Caco-2 (cell line): ENCODE measurements at regions of chr7 and their contacts with region 1.

Region 1: DNA sequence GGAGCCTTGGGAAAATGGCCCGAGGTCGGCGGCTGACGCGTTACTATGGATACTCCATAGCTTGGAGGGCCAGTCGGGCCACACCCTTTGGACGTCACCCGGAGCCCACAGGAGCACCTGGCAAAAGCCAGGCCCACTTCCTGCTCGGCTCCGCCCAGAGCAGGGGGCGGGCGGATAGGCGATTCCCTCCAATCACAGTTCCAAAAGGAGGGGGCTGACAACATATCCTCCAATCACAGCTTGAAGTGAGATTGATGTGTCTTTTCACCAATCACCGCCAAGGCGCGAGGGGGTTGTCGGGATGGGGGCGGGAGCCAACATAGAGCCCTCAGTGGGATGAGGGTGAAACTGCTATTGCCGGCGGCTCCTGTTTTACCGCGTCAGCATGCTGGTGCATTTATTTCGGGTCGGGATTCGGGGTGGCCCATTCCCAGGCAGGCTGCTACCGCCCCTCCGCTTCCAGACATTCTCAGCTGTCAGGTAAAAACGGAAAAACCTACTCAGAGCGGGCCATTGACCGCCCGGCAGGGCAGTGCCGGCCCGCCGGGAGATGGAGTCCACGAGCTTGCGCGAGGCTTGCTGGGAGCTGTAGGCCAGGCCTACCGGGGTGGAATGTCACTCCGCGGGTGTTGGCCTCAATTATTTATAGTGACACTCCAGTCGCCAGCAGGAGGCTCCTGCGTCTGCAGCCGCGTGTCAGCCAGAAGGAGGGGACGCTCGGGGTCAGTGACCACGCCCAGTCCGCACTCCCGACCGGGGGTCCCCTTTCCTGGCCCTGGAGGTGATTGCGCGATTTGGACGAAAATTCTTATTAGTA is at the start of gene ABCB8:
- DNase-seq: peak; percentile 100
- H3K4me3 ChIP-seq: peak within 1 kb of the TSS; percentile 70
- H3K4me3 Mint-ChIP-seq: peak within 1 kb of the TSS; percentile 87
- H3K27ac Mint-ChIP-seq: peak within 1 kb of the TSS; percentile 99
- H3K4me1 ChIP-seq: peaks cover 30% of the 10 kb centered on the region
- H3K4me1 Mint-ChIP-seq: peaks cover 35% of the 10 kb centered on the region
- H3K27me3 ChIP-seq: no peaks in the 10 kb centered on the region
- H3K27me3 Mint-ChIP-seq: no peaks in the 10 kb centered on the region
- CTCF ChIP-seq: peak; percentile 65 to 67
- total RNA-seq, gene ABCB8: 30.1 and 30.8 TPM in 2 replicates

Region 2: DNA sequence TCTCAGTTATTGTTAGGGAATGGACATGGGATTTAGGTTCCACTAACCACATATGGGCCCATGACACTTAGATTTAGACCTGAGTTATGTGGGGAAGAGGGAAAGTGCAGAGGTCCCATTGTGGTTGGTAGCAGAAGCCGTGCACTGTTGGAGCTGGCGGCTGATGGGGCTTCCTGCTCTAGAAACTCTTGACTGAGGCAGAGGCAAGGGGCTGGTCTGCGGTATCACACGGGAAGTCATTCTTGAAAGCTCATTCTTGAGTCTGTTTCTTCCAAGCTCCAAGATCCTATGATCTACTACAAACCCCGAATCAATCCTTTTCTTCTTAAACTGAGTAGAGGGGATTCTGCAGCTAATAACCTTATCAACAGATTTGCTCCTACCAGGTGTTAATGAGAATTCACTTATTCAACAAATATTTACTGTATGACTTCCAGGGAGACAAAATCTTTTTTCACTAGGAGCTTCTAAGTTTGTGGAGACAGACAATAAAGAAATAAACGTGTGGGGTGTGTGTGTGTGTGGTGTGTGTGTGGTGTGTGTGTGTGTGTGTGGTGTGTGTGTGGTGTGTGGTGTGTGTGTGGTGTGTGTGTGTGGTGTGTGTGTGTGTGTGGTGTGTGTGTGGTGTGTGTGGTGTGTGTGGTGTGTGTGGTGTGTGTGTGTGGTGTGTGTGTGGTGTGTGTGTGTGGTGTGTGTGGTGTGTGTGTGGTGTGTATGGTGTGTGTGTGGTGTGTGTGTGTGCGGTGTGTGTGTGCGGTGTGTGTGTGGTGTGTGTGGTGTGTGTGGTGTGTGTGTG is 118.9 kb before region 1 on chr7:
- CTCF ChIA-PET with region 1: no interaction called
- POLR2A ChIA-PET with region 1: no interaction called
- intact Hi-C with region 1: no loop called
- DNase-seq: no peak
- H3K4me3 ChIP-seq: no peak overlapping the region
- H3K4me3 Mint-ChIP-seq: no peak overlapping the region
- H3K27ac Mint-ChIP-seq: no peak overlapping the region
- H3K4me1 ChIP-seq: no peaks in the 10 kb centered on the region
- H3K4me1 Mint-ChIP-seq: no peaks in the 10 kb centered on the region
- H3K27me3 ChIP-seq: no peaks in the 10 kb centered on the region
- H3K27me3 Mint-ChIP-seq: peaks cover 27% of the 10 kb centered on the region
- CTCF ChIP-seq: no peak

Region 3: GRCh38 chr7:151017953-151018420 is 10.4 kb before region 1 on chr7:
- CTCF ChIA-PET with region 1: interaction called, 54 read pairs
- POLR2A ChIA-PET with region 1: interaction called, 4 read pairs
- intact Hi-C with region 1: loop called (anchors 1 kb)
- DNase-seq: peak; percentile 74 to 89
- H3K4me3 ChIP-seq: peak overlapping the region; percentile 33
- H3K4me3 Mint-ChIP-seq: peak overlapping the region; percentile 77
- H3K27ac Mint-ChIP-seq: peak overlapping the region; percentile 80
- H3K4me1 ChIP-seq: peaks cover 26% of the 10 kb centered on the region
- H3K4me1 Mint-ChIP-seq: peaks cover 12% of the 10 kb centered on the region
- H3K27me3 ChIP-seq: no peaks in the 10 kb centered on the region
- H3K27me3 Mint-ChIP-seq: peaks cover 6% of the 10 kb centered on the region
- CTCF ChIP-seq: peak; percentile 91 to 98

Region 4: GRCh38 chr7:151057989-151058780 is 29.8 kb after region 1 on chr7:
- CTCF ChIA-PET with region 1: interaction called, 21 read pairs
- POLR2A ChIA-PET with region 1: interaction called, 20 read pairs
- intact Hi-C with region 1: loop called (anchors 1 kb)
- DNase-seq: peak; percentile 98 to 99
- H3K4me3 ChIP-seq: peak overlapping the region; percentile 59
- H3K4me3 Mint-ChIP-seq: peak overlapping the region; percentile 95
- H3K27ac Mint-ChIP-seq: peak overlapping the region; percentile 94
- H3K4me1 ChIP-seq: peaks cover 23% of the 10 kb centered on the region
- H3K4me1 Mint-ChIP-seq: peaks cover 25% of the 10 kb centered on the region
- H3K27me3 ChIP-seq: no peaks in the 10 kb centered on the region
- H3K27me3 Mint-ChIP-seq: no peaks in the 10 kb centered on the region
- CTCF ChIP-seq: no peak

Region 5: GRCh38 chr7:151080522-151081169 is 52.3 kb after region 1 on chr7 and contains the start of gene FASTK:
- CTCF ChIA-PET with region 1: interaction called, 3 read pairs
- POLR2A ChIA-PET with region 1: interaction called, 13 read pairs
- intact Hi-C with region 1: loop called (anchors 2 kb)
- DNase-seq: peak; percentile 91 to 92
- H3K4me3 ChIP-seq: peak within 1 kb of the TSS; percentile 98
- H3K4me3 Mint-ChIP-seq: peak within 1 kb of the TSS; percentile 93
- H3K27ac Mint-ChIP-seq: peak within 1 kb of the TSS; percentile 87
- H3K4me1 ChIP-seq: peaks cover 26% of the 10 kb centered on the region
- H3K4me1 Mint-ChIP-seq: peaks cover 13% of the 10 kb centered on the region
- H3K27me3 ChIP-seq: no peaks in the 10 kb centered on the region
- H3K27me3 Mint-ChIP-seq: no peaks in the 10 kb centered on the region
- CTCF ChIP-seq: no peak
- total RNA-seq, gene FASTK: 114 and 119 TPM in 2 replicates

Region 6: DNA sequence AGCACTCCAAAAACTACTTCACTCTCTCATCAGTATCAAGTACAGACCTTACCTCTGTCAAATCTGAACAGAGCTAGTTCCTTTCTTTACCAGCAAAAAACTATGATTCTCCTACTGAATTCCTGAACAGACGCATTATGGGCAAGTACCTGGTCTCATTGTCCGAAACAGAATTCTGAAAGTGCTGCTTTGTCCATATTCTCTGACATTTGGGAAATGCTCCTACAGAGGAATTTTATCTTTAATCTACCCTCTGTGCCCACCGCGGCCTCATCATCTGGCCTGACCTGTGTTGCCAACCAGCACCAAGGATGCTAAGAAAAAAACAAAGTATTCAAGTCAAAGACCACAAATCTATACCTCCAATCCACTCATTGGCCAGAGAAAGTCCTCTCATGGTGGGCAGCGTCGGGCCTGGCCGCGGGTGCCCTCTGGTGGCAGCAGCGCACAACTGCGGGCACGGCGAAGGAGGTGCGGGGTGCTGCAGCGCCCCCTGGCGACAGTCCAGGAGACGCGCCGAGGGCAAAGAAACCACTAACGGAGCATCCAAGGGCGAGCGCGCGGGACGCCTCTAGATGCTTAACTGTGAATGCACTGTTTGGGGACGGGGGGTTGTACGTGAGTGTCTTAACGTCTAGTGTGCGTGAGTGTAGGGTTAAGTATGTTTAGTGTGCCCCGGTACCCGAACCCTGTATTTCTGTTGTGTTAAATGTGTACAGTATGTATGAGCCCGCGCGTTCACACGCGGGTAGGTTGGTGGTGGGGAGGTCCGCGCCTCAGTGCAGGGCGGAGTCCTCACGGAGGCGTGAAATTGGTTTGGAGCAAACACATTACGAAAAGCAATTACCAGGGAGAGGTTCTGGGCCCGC is 144.2 kb after region 1 on chr7:
- CTCF ChIA-PET with region 1: no interaction called
- POLR2A ChIA-PET with region 1: no interaction called
- intact Hi-C with region 1: no loop called
- DNase-seq: peak; percentile 63 to 84
- H3K4me3 ChIP-seq: no peak overlapping the region
- H3K4me3 Mint-ChIP-seq: no peak overlapping the region
- H3K27ac Mint-ChIP-seq: no peak overlapping the region
- H3K4me1 ChIP-seq: no peaks in the 10 kb centered on the region
- H3K4me1 Mint-ChIP-seq: peaks cover 5% of the 10 kb centered on the region
- H3K27me3 ChIP-seq: peaks cover 4% of the 10 kb centered on the region
- H3K27me3 Mint-ChIP-seq: peaks cover 33% of the 10 kb centered on the region
- CTCF ChIP-seq: peak; percentile 100

Region 7: DNA sequence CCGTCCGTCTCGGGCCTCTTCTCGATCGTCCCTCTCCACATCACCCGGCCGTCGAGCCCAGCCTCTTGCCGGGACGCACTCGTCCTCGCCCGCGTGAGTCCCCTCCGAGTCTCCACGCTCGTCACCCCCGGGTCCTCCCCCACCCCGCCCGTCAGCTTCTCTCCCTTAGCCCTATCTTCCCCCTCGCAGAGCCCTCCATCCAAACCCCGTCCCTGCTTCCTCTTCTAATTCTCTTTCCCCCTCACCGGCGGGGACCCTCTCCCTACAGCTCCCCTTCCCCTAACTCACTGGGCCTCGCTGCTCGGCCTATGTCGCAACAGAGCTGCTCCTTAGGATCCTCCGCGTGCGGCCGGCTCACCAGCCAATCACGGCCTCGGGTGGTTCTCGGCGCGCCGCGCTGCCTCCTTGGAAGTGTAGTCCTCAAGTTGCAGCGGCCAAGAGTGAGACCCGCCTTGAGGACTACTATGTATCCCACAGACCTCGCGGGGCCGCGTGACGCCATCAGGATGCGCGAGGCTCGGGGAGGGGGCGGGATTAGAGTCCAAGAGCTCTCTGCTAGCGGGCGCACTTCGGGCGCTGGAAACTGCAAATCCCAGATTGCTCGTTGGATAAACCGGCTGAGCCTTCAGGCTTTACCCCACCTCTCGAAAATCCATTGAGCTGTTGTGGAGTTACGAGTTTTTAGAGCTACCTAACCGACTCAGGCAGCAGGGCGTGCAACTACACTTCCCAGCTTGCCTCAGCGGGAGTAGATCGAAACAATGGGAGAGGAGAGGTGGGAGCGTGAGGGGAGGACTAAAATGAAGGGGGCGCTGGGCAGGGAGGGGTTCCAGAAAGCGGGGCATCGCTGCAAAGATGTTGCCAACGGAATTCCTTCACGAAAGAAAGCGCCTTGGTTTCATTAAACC is 198.8 kb after region 1 on chr7 and contains the start of gene ABCF2:
- CTCF ChIA-PET with region 1: interaction called, 3 read pairs
- POLR2A ChIA-PET with region 1: interaction called, 5 read pairs
- intact Hi-C with region 1: loop called (anchors 1 kb)
- DNase-seq: peak; percentile 98 to 99
- H3K4me3 ChIP-seq: peak within 1 kb of the TSS; percentile 81
- H3K4me3 Mint-ChIP-seq: peak within 1 kb of the TSS; percentile 88
- H3K27ac Mint-ChIP-seq: peak within 1 kb of the TSS; percentile 82
- H3K4me1 ChIP-seq: peaks cover 15% of the 10 kb centered on the region
- H3K4me1 Mint-ChIP-seq: peaks cover 21% of the 10 kb centered on the region
- H3K27me3 ChIP-seq: no peaks in the 10 kb centered on the region
- H3K27me3 Mint-ChIP-seq: no peaks in the 10 kb centered on the region
- CTCF ChIP-seq: no peak
- total RNA-seq, gene ABCF2: 50.8 and 57.8 TPM in 2 replicates

Region 8: GRCh38 chr7:151327659-151328058 is 299.3 kb after region 1 on chr7:
- CTCF ChIA-PET with region 1: no interaction called
- POLR2A ChIA-PET with region 1: interaction called, 10 read pairs
- intact Hi-C with region 1: no loop called
- DNase-seq: no peak
- H3K4me3 ChIP-seq: no peak overlapping the region
- H3K4me3 Mint-ChIP-seq: no peak overlapping the region
- H3K27ac Mint-ChIP-seq: no peak overlapping the region
- H3K4me1 ChIP-seq: no peaks in the 10 kb centered on the region
- H3K4me1 Mint-ChIP-seq: no peaks in the 10 kb centered on the region
- H3K27me3 ChIP-seq: no peaks in the 10 kb centered on the region
- H3K27me3 Mint-ChIP-seq: peaks cover 6% of the 10 kb centered on the region
- CTCF ChIP-seq: no peak